ENCODE measurements at regions of chr6 and their contacts with region 1.

Region 1: GRCh38 chr6:72411872-72412708 is 209.8 kb upstream of the KCNQ5 start:
- DNase-seq: peak; percentile 64 to 68 (median 66)
- H3K4me3 ChIP-seq: no peak overlapping the region
- H3K4me3 Mint-ChIP-seq: no peak overlapping the region
- H3K27ac ChIP-seq: no peak overlapping the region
- H3K27ac Mint-ChIP-seq: no peak overlapping the region
- H3K4me1 ChIP-seq: no peaks in the 10 kb centered on the region
- H3K4me1 Mint-ChIP-seq: no peaks in the 10 kb centered on the region
- H3K27me3 ChIP-seq: peaks cover 0 to 4% of the 10 kb centered on the region in 2 donors
- H3K27me3 Mint-ChIP-seq: peaks cover 0 to 6% (median 3%) of the 10 kb centered on the region in 3 donors
- CTCF ChIP-seq: peak; percentile 100

Region 2: GRCh38 chr6:72363844-72364740 is 48.0 kb before region 1 on chr6:
- intact Hi-C with region 1: no loop called
- DNase-seq: no peak
- H3K4me3 ChIP-seq: no peak overlapping the region
- H3K4me3 Mint-ChIP-seq: no peak overlapping the region
- H3K27ac ChIP-seq: no peak overlapping the region
- H3K27ac Mint-ChIP-seq: peak overlapping the region in 1 of 7 donors; percentile 64
- H3K4me1 ChIP-seq: no peaks in the 10 kb centered on the region
- H3K4me1 Mint-ChIP-seq: no peaks in the 10 kb centered on the region
- H3K27me3 ChIP-seq: peaks cover 0 to 2% of the 10 kb centered on the region in 2 donors
- H3K27me3 Mint-ChIP-seq: peaks cover 0 to 3% (median 1%) of the 10 kb centered on the region in 3 donors
- CTCF ChIP-seq: no peak

Region 3: GRCh38 chr6:72580281-72580940 is 168.3 kb after region 1 on chr6:
- intact Hi-C with region 1: loop called in 1 of 2 experiments (anchors 10 kb)
- DNase-seq: peak; percentile 35 to 67 (median 60)
- H3K4me3 ChIP-seq: no peak overlapping the region
- H3K4me3 Mint-ChIP-seq: peak overlapping the region in 1 of 2 donors; percentile 47
- H3K27ac ChIP-seq: peak overlapping the region in 1 of 2 donors; percentile 30
- H3K27ac Mint-ChIP-seq: peak overlapping the region in 3 of 7 donors; percentile 6 to 63 (median 43)
- H3K4me1 ChIP-seq: peaks cover 0 to 6% of the 10 kb centered on the region in 2 donors
- H3K4me1 Mint-ChIP-seq: peaks cover 6% of the 10 kb centered on the region
- H3K27me3 ChIP-seq: no peaks in the 10 kb centered on the region
- H3K27me3 Mint-ChIP-seq: peaks cover 0 to 3% (median 0%) of the 10 kb centered on the region in 3 donors
- CTCF ChIP-seq: peak; percentile 42

Region 4: DNA sequence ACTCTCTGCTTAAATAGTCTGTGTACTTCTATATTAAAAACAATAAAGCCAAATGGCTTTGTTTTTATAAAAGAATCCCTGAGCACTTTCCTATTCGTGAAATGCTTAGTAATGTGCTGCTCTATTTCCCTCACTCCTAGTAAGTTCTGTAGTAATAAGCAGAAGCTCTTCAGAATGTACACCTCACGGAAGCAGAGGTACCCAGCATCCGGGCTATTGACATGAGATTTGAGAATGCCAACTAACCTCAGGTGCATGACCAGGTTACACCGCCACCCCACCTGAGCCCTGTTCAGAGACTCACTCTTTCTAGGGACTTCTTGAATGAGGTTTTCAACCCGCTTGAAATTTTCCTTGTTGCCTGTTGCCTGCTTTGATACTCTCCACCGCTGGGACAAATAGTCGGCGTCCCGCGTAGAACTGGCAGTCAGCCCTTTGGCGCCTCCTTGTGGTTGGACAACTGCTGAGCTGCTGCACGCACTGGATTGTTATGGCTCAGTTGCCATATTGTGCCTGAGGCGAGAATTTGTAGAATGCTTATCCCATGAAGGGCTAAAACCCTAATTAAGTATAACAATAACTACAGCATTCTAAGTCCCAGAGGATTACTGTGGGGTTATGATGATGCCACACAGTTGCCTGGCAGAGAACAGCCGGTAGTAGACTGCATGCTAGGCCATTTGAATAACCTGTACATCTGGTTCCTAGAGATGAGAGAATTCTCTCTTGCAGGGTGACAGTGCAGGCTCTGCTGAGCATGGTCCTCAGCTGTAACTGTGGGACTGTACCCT is 717.8 kb after region 1 on chr6:
- intact Hi-C with region 1: loop called (anchors 2 to 5 kb)
- DNase-seq: peak; percentile 41 to 64 (median 54)
- H3K4me3 ChIP-seq: peak overlapping the region in 1 of 3 experiments; percentile 39
- H3K4me3 Mint-ChIP-seq: peak overlapping the region; percentile 51 to 80
- H3K27ac ChIP-seq: no peak overlapping the region
- H3K27ac Mint-ChIP-seq: no peak overlapping the region
- H3K4me1 ChIP-seq: peaks cover 3 to 5% of the 10 kb centered on the region in 2 donors
- H3K4me1 Mint-ChIP-seq: peaks cover 4% of the 10 kb centered on the region
- H3K27me3 ChIP-seq: no peaks in the 10 kb centered on the region
- H3K27me3 Mint-ChIP-seq: no peaks in the 10 kb centered on the region
- CTCF ChIP-seq: peak; percentile 96

Measured in CD14-positive monocyte (primary cell).